H1 (cell line): ENCODE measurements at regions of chr4 and their contacts with region 1.

Region 1: GRCh38 chr4:121421594-121421993 is 40.8 kb upstream of the QRFPR start:
- DNase-seq: no peak
- H3K4me3 ChIP-seq: no peak overlapping the region
- H3K27ac ChIP-seq: no peak overlapping the region
- H3K4me1 ChIP-seq: no peaks in the 10 kb centered on the region
- H3K27me3 ChIP-seq: no peaks in the 10 kb centered on the region
- CTCF ChIP-seq: peak in 2 of 3 experiments; percentile 50 to 64; a peak in 2 of 4 replicates
- EP300 ChIP-seq: no peak
- POLR2A ChIP-seq: no peak
- RAD21 ChIP-seq: peak; percentile 70 to 76

Region 2: GRCh38 chr4:121397941-121398601 is 23.5 kb before region 1 on chr4:
- CTCF ChIA-PET with region 1: interaction called, 12 read pairs
- POLR2A ChIA-PET with region 1: no interaction called
- DNase-seq: no peak
- H3K4me3 ChIP-seq: no peak overlapping the region
- H3K27ac ChIP-seq: no peak overlapping the region
- H3K4me1 ChIP-seq: no peaks in the 10 kb centered on the region
- H3K27me3 ChIP-seq: no peaks in the 10 kb centered on the region
- CTCF ChIP-seq: no peak
- EP300 ChIP-seq: no peak
- POLR2A ChIP-seq: no peak
- RAD21 ChIP-seq: no peak

Region 3: GRCh38 chr4:121411151-121411744 is 10.3 kb before region 1 on chr4:
- CTCF ChIA-PET with region 1: interaction called, 10 read pairs
- POLR2A ChIA-PET with region 1: no interaction called
- DNase-seq: peak in 1 of 2 experiments; percentile 10
- H3K4me3 ChIP-seq: no peak overlapping the region
- H3K27ac ChIP-seq: no peak overlapping the region
- H3K4me1 ChIP-seq: no peaks in the 10 kb centered on the region
- H3K27me3 ChIP-seq: no peaks in the 10 kb centered on the region
- CTCF ChIP-seq: no peak
- EP300 ChIP-seq: no peak
- POLR2A ChIP-seq: no peak
- RAD21 ChIP-seq: no peak